Activated CD8-positive, alpha-beta memory T cell treated with anti-CD3 and anti-CD28 coated beads, Interleukin-2, amount 10 ng/mL, durations not matched to agents 7 days and 5 days (primary cell): ENCODE measurements at regions of chr20 and their contacts with region 1.

Region 1: DNA sequence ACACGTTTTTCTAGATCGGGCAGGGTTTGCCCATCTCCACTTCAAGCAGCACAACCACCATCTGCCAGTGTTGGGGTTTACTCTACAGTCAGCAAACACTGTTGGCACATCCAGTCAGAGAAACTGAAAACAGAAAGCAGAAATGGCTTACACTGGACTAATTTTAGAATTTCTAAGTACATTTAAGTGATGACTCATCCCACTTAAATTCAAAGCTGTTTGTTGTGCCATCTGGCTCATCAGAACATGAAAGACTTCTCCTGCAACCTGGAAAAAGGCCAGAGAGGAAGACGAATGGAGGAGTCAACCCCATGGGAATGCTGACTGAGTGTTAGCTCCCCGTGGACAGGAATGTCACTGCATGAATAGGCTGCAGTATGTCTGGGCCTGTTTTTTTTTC is 21.8 kb downstream of the FAM209B start:
- DNase-seq: no peak
- ATAC-seq: peak; percentile 69
- H3K4me3 Mint-ChIP-seq: peak overlapping the region; percentile 1
- H3K27ac Mint-ChIP-seq: peak overlapping the region; percentile 4
- H3K4me1 Mint-ChIP-seq: peaks cover 9% of the 10 kb centered on the region
- H3K27me3 Mint-ChIP-seq: peaks cover 4% of the 10 kb centered on the region

Region 2: GRCh38 chr20:56285491-56285890 is 269.4 kb before region 1 on chr20:
- CTCF ChIA-PET with region 1: no interaction called
- DNase-seq: no peak
- ATAC-seq: no peak
- H3K4me3 Mint-ChIP-seq: no peak overlapping the region
- H3K27ac Mint-ChIP-seq: no peak overlapping the region
- H3K4me1 Mint-ChIP-seq: no peaks in the 10 kb centered on the region
- H3K27me3 Mint-ChIP-seq: no peaks in the 10 kb centered on the region

Region 3: GRCh38 chr20:56443654-56444540 is 111.0 kb before region 1 on chr20:
- CTCF ChIA-PET with region 1: no interaction called
- DNase-seq: no peak
- ATAC-seq: no peak
- H3K4me3 Mint-ChIP-seq: no peak overlapping the region
- H3K27ac Mint-ChIP-seq: no peak overlapping the region
- H3K4me1 Mint-ChIP-seq: peaks cover 39% of the 10 kb centered on the region
- H3K27me3 Mint-ChIP-seq: no peaks in the 10 kb centered on the region

Region 4: DNA sequence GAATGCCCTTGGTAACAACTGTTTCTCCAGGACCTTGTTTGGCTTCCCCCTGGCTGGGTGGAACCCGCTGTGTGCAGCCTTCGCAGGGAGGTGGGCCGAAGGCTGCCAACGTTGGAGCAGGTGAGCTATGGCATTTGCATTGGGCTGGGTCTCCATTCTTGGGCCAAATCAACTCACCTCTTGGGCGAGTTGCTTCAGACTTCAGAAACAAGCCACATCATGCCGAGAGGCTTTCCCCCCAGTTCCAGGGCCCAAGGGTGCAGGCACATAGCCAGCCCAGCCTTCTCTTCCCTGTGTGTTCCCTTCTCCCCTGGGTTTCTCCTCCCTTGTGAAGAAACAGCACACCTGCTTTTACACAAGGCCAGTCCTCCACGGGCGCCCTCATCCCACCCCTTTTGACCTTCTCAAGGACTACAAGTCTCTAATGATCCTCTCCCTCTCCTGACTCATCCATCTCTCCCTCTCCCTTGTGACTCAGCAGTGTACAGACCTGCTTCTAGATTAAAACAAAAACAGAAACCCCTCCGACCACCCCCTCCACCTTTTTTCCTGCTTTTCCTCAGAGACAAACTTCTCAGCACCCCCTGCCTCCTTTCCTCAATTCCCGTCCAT is 19.8 kb after region 1 on chr20:
- CTCF ChIA-PET with region 1: interaction called, 11 read pairs
- DNase-seq: no peak
- ATAC-seq: no peak
- H3K4me3 Mint-ChIP-seq: no peak overlapping the region
- H3K27ac Mint-ChIP-seq: no peak overlapping the region
- H3K4me1 Mint-ChIP-seq: no peaks in the 10 kb centered on the region
- H3K27me3 Mint-ChIP-seq: peaks cover 2% of the 10 kb centered on the region

Region 5: GRCh38 chr20:56595746-56596478 is 41.0 kb after region 1 on chr20:
- CTCF ChIA-PET with region 1: no interaction called
- DNase-seq: no peak
- ATAC-seq: no peak
- H3K4me3 Mint-ChIP-seq: no peak overlapping the region
- H3K27ac Mint-ChIP-seq: no peak overlapping the region
- H3K4me1 Mint-ChIP-seq: no peaks in the 10 kb centered on the region
- H3K27me3 Mint-ChIP-seq: peaks cover 6% of the 10 kb centered on the region

Region 6: DNA sequence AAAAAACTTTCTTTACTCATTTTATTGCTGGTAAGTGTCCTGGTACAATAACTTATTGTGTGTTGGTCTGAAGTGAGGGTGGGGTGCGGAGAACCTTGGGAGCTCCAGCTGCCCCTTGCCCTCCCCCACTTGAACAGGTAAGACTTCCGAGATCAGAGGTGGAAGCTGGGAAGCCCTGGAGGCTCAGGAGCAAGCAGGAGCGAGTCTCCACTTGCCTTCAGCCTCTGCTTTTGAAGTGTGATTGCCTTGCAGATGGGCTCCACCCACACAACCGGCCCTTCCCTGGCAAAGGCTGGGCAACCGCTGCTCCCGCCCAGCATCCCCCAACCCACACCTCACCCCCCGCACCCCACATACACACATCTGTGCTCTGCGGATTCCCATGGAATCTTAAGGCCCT is 253.9 kb after region 1 on chr20:
- CTCF ChIA-PET with region 1: no interaction called
- DNase-seq: no peak
- ATAC-seq: no peak
- H3K4me3 Mint-ChIP-seq: no peak overlapping the region
- H3K27ac Mint-ChIP-seq: no peak overlapping the region
- H3K4me1 Mint-ChIP-seq: no peaks in the 10 kb centered on the region
- H3K27me3 Mint-ChIP-seq: no peaks in the 10 kb centered on the region

Region 7: GRCh38 chr20:56974499-56975236 is 419.8 kb after region 1 on chr20:
- CTCF ChIA-PET with region 1: interaction called, 12 read pairs
- DNase-seq: peak; percentile 43
- ATAC-seq: no peak
- H3K4me3 Mint-ChIP-seq: no peak overlapping the region
- H3K27ac Mint-ChIP-seq: no peak overlapping the region
- H3K4me1 Mint-ChIP-seq: no peaks in the 10 kb centered on the region
- H3K27me3 Mint-ChIP-seq: peaks cover 21% of the 10 kb centered on the region